SK-N-SH (cell line): ENCODE measurements at regions of chr17 and their contacts with region 1.

Region 1: GRCh38 chr17:66518677-66519076 is 216.3 kb downstream of the PRKCA start:
- DNase-seq: peak; percentile 49
- H3K4me3 ChIP-seq: no peak overlapping the region
- H3K27ac ChIP-seq: no peak overlapping the region; a peak in 1 of 4 replicates
- H3K4me1 ChIP-seq: peaks cover 17 to 18% of the 10 kb centered on the region in 2 experiments; a peak in 3 of 4 replicates
- H3K27me3 ChIP-seq: no peaks in the 10 kb centered on the region
- CTCF ChIP-seq: no peak
- EP300 ChIP-seq: no peak
- RAD21 ChIP-seq: no peak

Region 2: GRCh38 chr17:66533572-66533971 is 14.9 kb after region 1 on chr17:
- CTCF ChIA-PET with region 1: interaction called, 11 read pairs
- POLR2A ChIA-PET with region 1: no interaction called
- DNase-seq: peak; percentile 34
- H3K4me3 ChIP-seq: no peak overlapping the region
- H3K27ac ChIP-seq: peak overlapping the region; percentile 5 to 18; a peak in 2 of 4 replicates
- H3K4me1 ChIP-seq: peaks cover 20 to 26% of the 10 kb centered on the region in 2 experiments; a peak in 3 of 4 replicates
- H3K27me3 ChIP-seq: no peaks in the 10 kb centered on the region
- CTCF ChIP-seq: peak; percentile 12; the same call in 1 of the 2 replicates
- EP300 ChIP-seq: no peak; a peak in 1 of 4 replicates
- RAD21 ChIP-seq: peak; percentile 61

Region 3: GRCh38 chr17:66552371-66552770 is 33.7 kb after region 1 on chr17:
- CTCF ChIA-PET with region 1: no interaction called
- POLR2A ChIA-PET with region 1: no interaction called
- DNase-seq: no peak
- H3K4me3 ChIP-seq: no peak overlapping the region
- H3K27ac ChIP-seq: no peak overlapping the region
- H3K4me1 ChIP-seq: peaks cover 14 to 28% of the 10 kb centered on the region in 2 experiments; a peak in 3 of 4 replicates
- H3K27me3 ChIP-seq: no peaks in the 10 kb centered on the region
- CTCF ChIP-seq: no peak
- EP300 ChIP-seq: no peak
- RAD21 ChIP-seq: no peak